Endothelial cell of umbilical vein (primary cell): ENCODE measurements at regions of chr12 and their contacts with region 1.

Region 1: GRCh38 chr12:104974616-104975290 is 11.4 kb upstream of the NOPCHAP1 start:
- DNase-seq: no peak
- H3K4me3 ChIP-seq: no peak overlapping the region
- H3K27ac ChIP-seq: no peak overlapping the region
- H3K4me1 ChIP-seq: no peaks in the 10 kb centered on the region
- H3K27me3 ChIP-seq: peaks cover 0 to 3% of the 10 kb centered on the region in 2 experiments
- CTCF ChIP-seq: no peak
- POLR2A ChIP-seq: no peak

Region 2: DNA sequence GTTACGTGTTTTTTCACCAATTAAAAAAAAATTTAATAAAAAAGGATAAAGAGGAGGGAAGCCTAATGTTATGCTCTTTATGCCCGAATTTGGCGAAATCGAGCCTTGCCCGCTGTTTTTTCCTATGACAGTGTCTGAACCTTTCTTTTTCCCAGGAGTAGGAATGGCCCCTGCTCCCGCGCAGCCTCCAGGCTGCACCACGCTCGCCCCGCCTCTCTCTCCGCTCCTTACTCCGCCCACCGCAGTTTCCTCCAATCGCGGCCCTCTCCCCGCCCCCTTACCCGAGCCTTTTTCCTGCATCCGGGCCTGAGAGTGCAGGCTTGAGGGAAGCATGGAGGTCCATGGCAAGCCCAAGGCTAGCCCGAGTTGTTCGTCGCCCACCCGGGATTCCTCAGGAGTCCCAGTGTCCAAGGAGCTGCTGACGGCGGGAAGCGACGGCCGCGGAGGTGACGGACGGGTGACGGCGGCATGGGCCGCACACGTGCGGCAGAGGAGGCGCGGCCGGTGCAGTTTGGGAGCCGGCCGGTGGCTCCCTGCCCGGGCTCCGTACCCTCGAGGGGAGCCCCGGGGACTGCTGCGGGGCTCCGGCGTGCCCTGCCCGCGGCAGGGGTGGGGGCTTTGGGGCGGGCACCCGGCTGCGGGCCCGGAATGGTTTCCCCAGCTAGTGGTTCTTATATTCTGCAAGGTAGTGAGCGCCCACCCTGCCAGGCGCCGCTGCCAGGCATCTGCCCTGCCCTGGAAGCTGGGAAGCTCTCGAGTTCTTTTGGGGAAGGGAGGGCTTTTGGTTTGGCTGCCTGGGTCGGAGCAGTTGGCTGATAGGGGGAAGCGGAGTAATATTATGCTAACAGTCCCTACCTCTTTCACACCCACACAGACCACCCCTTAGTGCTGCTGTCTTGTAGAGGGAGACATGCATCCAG is 11.5 kb after region 1 on chr12 and contains the start of gene NOPCHAP1:
- CTCF ChIA-PET with region 1: interaction called, 4 read pairs
- POLR2A ChIA-PET with region 1: no interaction called
- dilution Hi-C with region 1: no loop called
- intact Hi-C with region 1: loop called (anchors 1 kb)
- DNase-seq: peak; percentile 92
- H3K4me3 ChIP-seq: peak within 1 kb of the TSS; percentile 31 to 72 (median 50)
- H3K27ac ChIP-seq: no peak within 1 kb of the TSS
- H3K4me1 ChIP-seq: peaks cover 12% of the 10 kb centered on the region
- H3K27me3 ChIP-seq: no peaks in the 10 kb centered on the region
- CTCF ChIP-seq: no peak
- POLR2A ChIP-seq: peak; percentile 95
- total RNA-seq, gene NOPCHAP1: 17.8 and 18.2 TPM in 2 replicates

Region 3: DNA sequence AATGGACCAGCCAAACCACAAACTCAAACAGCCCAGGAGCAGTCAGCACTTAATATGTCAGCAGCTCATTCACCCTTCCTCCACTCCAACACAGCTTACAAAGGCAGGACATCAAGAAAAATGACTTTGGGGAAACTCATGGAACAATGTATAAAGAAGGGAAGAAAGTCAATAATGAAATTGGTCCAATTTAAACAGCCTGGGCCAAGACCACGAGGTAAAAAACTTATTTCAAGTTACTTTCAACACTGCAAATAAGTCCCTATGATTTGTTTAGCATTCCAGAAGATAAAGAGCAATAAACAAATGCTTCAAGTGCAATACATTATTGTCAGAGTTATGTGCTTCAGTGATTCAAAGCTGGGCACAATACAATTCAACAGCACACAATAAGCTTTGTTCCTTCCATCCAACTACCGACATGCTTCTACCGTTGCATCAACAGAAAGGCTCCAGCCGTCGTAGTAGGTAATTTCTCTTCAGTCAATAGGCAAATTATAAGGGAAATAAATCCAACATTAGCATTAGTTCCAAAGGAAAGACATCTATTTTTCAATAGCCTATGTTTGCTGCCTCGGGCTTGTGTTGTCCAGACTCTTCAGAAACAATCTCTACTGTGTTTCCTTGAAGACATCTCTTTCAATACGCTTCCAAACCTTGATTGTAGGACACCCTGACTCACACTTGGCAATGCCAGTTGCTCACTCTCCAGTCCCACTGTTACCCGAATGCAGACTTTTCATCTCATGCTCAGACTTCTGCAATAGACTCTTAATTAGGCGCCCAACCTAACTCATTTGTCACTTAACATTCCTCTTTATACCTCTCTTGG is 938.3 kb after region 1 on chr12:
- CTCF ChIA-PET with region 1: no interaction called
- POLR2A ChIA-PET with region 1: no interaction called
- dilution Hi-C with region 1: no loop called
- intact Hi-C with region 1: loop called (anchors 5 kb)
- DNase-seq: no peak
- H3K4me3 ChIP-seq: no peak overlapping the region
- H3K27ac ChIP-seq: no peak overlapping the region
- H3K4me1 ChIP-seq: no peaks in the 10 kb centered on the region
- H3K27me3 ChIP-seq: peaks cover 0 to 10% of the 10 kb centered on the region in 2 experiments
- CTCF ChIP-seq: no peak
- POLR2A ChIP-seq: no peak